PC-9 (cell line): ENCODE measurements at regions of chr16 and their contacts with region 1.

Region 1: DNA sequence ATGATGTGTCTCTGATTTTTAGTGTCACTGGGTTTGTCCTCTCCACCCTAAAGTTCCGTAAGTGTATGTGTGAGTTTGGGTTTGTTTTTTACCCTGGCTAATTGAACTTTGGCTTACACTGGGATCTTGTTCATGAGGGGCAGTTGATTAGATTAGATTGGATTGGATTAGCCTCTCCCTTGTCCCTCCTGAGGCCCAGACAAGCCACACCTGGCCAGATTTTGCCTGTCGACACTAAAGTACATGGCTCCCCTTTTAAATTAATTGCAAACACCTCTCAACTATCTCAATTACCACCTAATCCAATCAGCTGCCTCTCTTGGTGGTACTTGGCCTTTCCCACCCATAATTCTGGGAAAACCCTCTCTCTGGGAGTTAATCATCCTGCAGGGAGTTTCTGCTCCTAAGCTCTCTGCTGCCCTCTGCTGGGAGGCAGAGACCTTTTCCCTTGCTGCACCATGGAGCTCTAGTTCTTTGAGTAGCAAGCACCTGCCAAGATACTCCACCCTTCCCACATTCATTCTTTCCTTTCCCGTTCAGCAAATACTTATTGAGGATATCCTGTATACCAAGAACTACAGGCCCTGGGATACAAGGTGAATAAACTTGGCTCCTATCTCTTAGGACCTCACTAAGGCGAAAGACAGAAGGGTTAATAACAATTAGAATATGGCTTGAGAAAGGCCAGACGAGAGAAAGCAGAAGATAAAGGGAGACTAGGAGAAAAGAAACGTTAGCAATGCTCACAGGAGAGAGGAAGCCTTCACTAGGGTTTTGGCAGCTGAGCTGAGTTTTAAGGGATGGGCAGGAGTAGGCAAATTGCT is 60.0 kb upstream of the MPHOSPH6 start:
- DNase-seq: peak; percentile 45 to 59
- H3K4me3 ChIP-seq: no peak overlapping the region
- H3K27ac ChIP-seq: no peak overlapping the region
- H3K4me1 ChIP-seq: no peaks in the 10 kb centered on the region
- H3K27me3 ChIP-seq: peaks cover 39% of the 10 kb centered on the region
- CTCF ChIP-seq: peak; percentile 94

Region 2: GRCh38 chr16:81885976-81886586 is 343.9 kb before region 1 on chr16:
- CTCF ChIA-PET with region 1: no interaction called
- POLR2A ChIA-PET with region 1: no interaction called
- intact Hi-C with region 1: loop called (anchors 1 kb)
- DNase-seq: peak in 1 of 2 experiments; percentile 37
- H3K4me3 ChIP-seq: no peak overlapping the region
- H3K27ac ChIP-seq: no peak overlapping the region
- H3K4me1 ChIP-seq: 0 out of 2 replicates have a peak, but pooled peaks cover 12% of the 10 kb centered on the region
- H3K27me3 ChIP-seq: no peaks in the 10 kb centered on the region
- CTCF ChIP-seq: peak; percentile 80

Region 3: DNA sequence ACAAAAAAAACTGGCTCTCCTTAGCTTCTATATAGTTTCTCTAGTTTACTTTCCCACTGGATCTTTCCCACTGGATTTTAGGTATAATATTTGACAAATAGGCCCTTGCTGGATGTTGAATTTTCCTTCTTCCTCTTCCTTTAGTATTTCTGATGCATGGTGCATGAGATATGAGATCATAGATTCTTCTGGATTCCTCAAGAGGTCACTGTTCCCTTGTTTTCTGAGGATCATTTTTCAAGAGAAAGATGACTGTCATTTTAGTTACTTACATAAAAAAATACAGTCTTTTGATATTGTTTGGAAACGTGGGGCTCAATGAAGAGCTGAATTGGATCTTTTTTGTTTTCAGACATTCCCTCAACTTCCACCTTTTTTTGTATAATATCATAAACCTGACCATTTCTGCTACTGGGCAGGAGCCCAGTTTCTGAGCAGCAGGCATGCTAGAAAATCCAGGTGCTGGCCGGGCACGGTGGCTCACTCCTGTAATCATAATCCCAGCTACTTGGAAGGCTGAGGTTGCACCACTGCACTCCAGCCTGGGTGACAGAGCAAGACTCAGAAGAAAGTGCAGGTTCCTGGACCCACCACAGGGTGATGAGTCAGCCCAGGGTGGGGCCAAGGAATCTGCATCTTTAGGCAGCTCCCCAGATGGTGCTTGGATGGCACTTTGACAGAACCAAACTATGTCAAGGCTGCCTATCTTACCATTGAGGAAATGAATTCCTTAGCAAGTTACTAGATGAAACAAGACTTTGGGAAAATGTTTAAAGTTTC is 289.0 kb before region 1 on chr16:
- CTCF ChIA-PET with region 1: interaction called, 4 read pairs
- POLR2A ChIA-PET with region 1: no interaction called
- intact Hi-C with region 1: loop called (anchors 1 kb)
- DNase-seq: peak in 1 of 2 experiments; percentile 64
- H3K4me3 ChIP-seq: no peak overlapping the region
- H3K27ac ChIP-seq: no peak overlapping the region
- H3K4me1 ChIP-seq: no peaks in the 10 kb centered on the region
- H3K27me3 ChIP-seq: no peaks in the 10 kb centered on the region
- CTCF ChIP-seq: peak; percentile 74

Region 4: GRCh38 chr16:82031116-82032084 is 198.6 kb before region 1 on chr16:
- CTCF ChIA-PET with region 1: interaction called, 3 read pairs
- POLR2A ChIA-PET with region 1: no interaction called
- intact Hi-C with region 1: loop called (anchors 2 kb)
- DNase-seq: no peak
- H3K4me3 ChIP-seq: no peak overlapping the region
- H3K27ac ChIP-seq: no peak overlapping the region
- H3K4me1 ChIP-seq: no peaks in the 10 kb centered on the region
- H3K27me3 ChIP-seq: peaks cover 70% of the 10 kb centered on the region
- CTCF ChIP-seq: peak; percentile 47

Region 5: DNA sequence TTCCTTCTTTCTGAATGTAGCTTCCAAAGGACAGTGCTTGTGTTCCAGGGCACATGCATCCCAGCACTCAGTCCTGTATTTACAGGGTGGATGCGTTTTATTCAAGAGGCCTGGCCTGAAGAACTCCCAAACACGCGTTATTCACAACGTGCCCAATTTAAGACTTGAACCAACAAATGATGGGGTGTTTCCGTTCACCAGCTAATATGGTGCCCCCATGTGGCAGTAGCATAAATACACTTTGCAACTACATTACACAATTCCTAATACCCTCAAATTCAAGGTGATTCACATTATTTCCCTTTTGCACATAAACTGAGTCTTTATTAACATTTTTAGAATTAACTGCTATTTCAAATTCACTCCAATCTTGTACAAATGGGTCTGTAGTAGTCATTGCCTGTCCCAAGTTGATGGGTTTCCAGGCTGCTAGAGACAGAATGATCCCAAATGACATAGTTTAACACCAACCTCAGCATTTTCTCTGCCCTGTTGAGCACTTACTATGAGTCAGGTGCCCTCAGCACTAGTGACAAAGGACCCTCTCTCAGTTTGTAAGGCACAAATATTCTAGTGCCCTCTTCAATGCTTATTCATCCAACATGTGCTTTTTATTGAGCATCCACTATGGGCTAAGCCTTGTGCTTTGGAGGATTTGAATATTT is 168.0 kb before region 1 on chr16:
- CTCF ChIA-PET with region 1: interaction called, 11 read pairs
- POLR2A ChIA-PET with region 1: interaction called, 4 read pairs
- intact Hi-C with region 1: no loop called
- DNase-seq: no peak
- H3K4me3 ChIP-seq: no peak overlapping the region
- H3K27ac ChIP-seq: no peak overlapping the region
- H3K4me1 ChIP-seq: no peaks in the 10 kb centered on the region
- H3K27me3 ChIP-seq: peaks cover 44% of the 10 kb centered on the region
- CTCF ChIP-seq: peak; percentile 72

Region 6: GRCh38 chr16:82169861-82170845 is 59.9 kb before region 1 on chr16 and contains the start of gene MPHOSPH6:
- CTCF ChIA-PET with region 1: interaction called, 11 read pairs
- POLR2A ChIA-PET with region 1: no interaction called
- intact Hi-C with region 1: no loop called
- DNase-seq: peak; percentile 76 to 84
- H3K4me3 ChIP-seq: peak within 1 kb of the TSS; percentile 97
- H3K27ac ChIP-seq: no peak within 1 kb of the TSS
- H3K4me1 ChIP-seq: peaks cover 7% of the 10 kb centered on the region; the same call in 1 of the 2 replicates
- H3K27me3 ChIP-seq: peaks cover 33% of the 10 kb centered on the region
- CTCF ChIP-seq: no peak
- total RNA-seq, gene MPHOSPH6: 11.6 and 15.2 TPM in 2 replicates

Region 7: GRCh38 chr16:82368041-82368440 is 138.0 kb after region 1 on chr16:
- CTCF ChIA-PET with region 1: no interaction called
- POLR2A ChIA-PET with region 1: no interaction called
- intact Hi-C with region 1: no loop called
- DNase-seq: no peak
- H3K4me3 ChIP-seq: no peak overlapping the region
- H3K27ac ChIP-seq: no peak overlapping the region
- H3K4me1 ChIP-seq: no peaks in the 10 kb centered on the region
- H3K27me3 ChIP-seq: no peaks in the 10 kb centered on the region
- CTCF ChIP-seq: peak; percentile 42; the same call in 1 of the 2 replicates